Mammary epithelial cell (primary cell): ENCODE measurements at regions of chr3 and their contacts with region 1.

Region 1: DNA sequence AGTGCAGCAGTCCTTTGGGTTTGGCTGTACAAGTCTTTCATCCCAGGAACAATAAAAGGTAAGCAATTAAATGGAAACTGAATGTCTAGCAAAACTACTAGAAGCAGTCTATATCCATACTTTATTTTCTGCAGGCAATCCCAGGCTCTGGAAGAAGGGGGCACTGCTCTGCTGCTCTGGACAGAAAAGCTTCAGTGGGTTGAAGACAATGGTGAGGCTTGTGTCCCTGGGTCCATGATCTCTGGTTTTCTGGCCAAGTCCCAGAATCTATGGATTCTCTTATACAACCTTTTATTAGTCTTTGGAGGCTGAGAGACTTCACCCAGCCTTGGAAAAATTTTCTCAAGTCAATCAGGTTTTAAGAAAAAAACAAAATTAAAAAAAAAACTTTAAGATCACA is 35.6 kb downstream of the SCAP start:
- DNase-seq: no peak
- H3K4me3 ChIP-seq: no peak overlapping the region
- H3K27ac ChIP-seq: no peak overlapping the region
- H3K4me1 ChIP-seq: peaks cover 29% of the 10 kb centered on the region
- H3K27me3 ChIP-seq: no peaks in the 10 kb centered on the region
- CTCF ChIP-seq: peak; percentile 15 to 53

Region 2: DNA sequence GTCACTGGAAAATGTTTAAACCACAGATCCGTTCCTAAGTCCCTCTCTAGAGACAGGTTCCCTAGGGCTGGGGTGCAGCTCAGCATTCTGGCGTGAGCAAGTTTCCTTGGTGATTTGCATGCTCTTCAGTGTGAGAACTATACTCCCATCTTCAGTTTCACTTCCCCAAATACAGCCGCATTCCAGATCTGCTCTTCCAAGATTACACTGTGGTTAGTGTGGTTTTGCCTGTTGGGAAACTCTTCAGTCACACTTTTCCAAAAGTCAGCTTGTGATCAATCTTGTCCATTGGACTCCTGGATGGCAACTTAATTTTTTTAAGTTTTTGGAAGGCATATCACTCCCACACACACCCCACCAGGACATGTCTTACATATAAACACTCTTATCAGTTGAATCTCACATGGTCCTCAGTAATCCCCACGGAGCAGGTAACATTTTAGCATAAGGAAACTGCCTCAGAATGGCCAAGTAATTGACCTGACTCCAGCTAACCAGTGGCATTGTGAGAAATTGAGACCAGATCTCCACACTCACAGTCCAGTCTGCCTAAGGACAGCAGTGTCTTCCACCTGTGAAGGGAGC is 92.8 kb before region 1 on chr3:
- CTCF ChIA-PET with region 1: no interaction called
- dilution Hi-C with region 1: no loop called
- in situ Hi-C with region 1: no loop called
- intact Hi-C with region 1: no loop called
- DNase-seq: peak; percentile 47
- H3K4me3 ChIP-seq: no peak overlapping the region
- H3K27ac ChIP-seq: no peak overlapping the region
- H3K4me1 ChIP-seq: peaks cover 5% of the 10 kb centered on the region
- H3K27me3 ChIP-seq: no peaks in the 10 kb centered on the region
- CTCF ChIP-seq: no peak

Region 3: DNA sequence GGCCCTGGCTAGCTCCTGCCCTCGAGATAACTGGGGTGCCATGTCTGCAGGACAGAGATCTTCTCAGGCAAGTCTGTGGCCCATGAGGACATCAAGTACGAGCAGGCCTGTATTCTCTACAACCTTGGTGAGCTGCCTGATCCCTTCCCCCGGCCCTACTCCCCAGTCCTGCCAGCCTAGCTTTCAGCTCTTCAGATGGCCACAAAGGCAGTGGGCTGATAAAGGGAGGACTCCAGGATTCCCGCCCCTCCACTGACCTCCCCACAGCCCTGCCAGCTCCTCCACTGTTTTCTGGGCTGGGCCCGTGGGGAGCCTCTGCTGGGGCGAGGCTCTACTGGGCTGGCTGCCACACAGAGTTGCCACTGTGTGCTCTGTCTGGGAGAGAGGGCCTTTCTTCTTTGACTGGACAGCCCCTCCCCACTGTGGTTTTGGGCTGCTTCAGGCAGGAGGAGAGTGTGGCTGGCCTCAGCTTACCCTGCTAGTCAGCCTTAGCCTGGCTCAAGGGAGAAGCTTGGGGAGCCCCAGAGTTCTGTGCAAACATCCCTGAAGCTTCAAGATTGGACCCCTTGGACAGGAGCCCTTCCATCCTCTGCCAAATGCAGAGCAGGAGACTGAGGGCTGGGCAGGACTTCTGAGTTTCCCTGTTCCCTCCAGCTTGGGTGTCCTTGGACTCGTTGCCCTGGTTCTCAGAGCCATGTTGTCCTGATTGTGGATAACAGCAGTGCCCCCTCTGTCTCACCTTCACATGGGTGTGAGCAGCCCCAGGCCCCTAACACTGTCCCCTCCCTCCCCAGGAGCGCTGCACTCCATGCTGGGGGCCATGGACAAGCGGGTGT is 35.0 kb before region 1 on chr3:
- CTCF ChIA-PET with region 1: no interaction called
- dilution Hi-C with region 1: loop called (anchors 5 kb)
- in situ Hi-C with region 1: no loop called
- intact Hi-C with region 1: no loop called
- DNase-seq: peak; percentile 23
- H3K4me3 ChIP-seq: no peak overlapping the region
- H3K27ac ChIP-seq: no peak overlapping the region
- H3K4me1 ChIP-seq: peaks cover 9% of the 10 kb centered on the region
- H3K27me3 ChIP-seq: no peaks in the 10 kb centered on the region
- CTCF ChIP-seq: no peak

Region 4: GRCh38 chr3:47475570-47476329 is 35.6 kb after region 1 on chr3 and contains the start of gene SCAP:
- CTCF ChIA-PET with region 1: no interaction called
- dilution Hi-C with region 1: no loop called
- in situ Hi-C with region 1: loop called in 1 of 2 experiments (anchors 5 kb)
- intact Hi-C with region 1: loop called (anchors 1 kb)
- DNase-seq: peak; percentile 79
- H3K4me3 ChIP-seq: peak within 1 kb of the TSS; percentile 89 to 99 (median 94)
- H3K27ac ChIP-seq: peak within 1 kb of the TSS; percentile 55
- H3K4me1 ChIP-seq: peaks cover 5% of the 10 kb centered on the region
- H3K27me3 ChIP-seq: no peaks in the 10 kb centered on the region
- CTCF ChIP-seq: peak; percentile 59 to 87
- total RNA-seq, gene SCAP: 72.5 to 75.4 TPM

Region 5: DNA sequence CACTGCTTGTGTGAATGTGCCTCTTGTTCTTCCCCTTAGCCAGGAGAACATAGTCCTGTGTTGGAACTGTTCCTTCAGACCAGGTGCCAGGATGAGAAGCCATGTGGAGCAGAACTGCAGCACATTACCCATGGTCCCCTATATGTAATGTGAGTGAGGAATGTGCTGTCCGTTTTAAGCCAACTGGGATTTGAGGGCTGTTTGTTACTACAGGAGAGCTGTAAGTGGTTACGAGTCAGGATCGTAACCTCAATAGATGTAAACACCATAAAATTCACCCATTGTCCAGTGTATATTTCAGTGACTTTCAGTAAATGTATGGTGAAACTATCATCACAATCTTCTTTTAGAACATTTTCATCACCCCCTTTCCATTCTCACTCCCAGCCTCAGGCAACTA is 45.7 kb after region 1 on chr3:
- CTCF ChIA-PET with region 1: interaction called, 6 read pairs
- dilution Hi-C with region 1: loop called (anchors 5 kb)
- in situ Hi-C with region 1: no loop called
- intact Hi-C with region 1: no loop called
- DNase-seq: no peak
- H3K4me3 ChIP-seq: no peak overlapping the region
- H3K27ac ChIP-seq: no peak overlapping the region
- H3K4me1 ChIP-seq: no peaks in the 10 kb centered on the region
- H3K27me3 ChIP-seq: no peaks in the 10 kb centered on the region
- CTCF ChIP-seq: no peak

Region 6: DNA sequence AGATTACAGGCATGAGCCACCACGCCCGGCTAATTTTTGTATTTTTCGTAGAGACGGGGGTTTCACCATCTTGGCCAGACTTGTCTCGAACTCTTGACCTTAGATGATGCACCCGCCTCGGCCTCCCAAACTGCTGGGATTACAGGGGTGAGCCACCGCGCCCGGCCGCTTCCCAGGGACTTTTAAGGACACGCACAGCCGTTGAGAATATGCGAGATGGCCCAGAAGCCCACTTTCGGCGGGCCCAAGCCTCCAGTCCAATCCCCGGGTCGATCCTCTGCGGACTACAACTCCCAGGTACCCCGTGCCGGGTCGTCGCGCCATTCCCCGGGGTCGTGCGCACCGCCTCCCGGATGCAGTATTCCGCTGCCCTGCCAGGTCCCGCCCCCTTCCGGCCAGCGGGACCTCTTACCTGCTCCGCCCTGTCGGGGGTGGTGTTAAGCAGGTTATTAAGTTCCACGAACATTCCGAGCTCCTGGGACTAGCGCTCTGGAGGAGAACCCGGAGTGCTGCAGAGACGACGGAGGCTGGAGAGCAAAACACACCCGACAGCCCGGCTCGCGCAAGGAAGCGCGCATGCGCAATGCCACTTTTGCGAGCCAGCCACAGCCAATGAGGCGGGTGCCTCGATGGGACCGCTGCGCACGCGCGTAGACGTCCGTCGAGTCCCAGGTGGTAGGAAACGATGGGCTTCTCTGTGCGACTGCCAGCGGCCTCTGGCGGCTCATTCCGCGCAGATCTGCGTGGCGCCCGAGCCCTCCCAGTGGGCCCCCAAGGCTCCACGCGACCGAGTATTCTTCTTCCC is 73.2 kb after region 1 on chr3 and contains the start of gene ELP6:
- CTCF ChIA-PET with region 1: no interaction called
- dilution Hi-C with region 1: no loop called
- in situ Hi-C with region 1: no loop called
- intact Hi-C with region 1: loop called (anchors 1 kb)
- DNase-seq: peak; percentile 93
- H3K4me3 ChIP-seq: peak within 1 kb of the TSS; percentile 85 to 91 (median 85)
- H3K27ac ChIP-seq: peak within 1 kb of the TSS; percentile 69
- H3K4me1 ChIP-seq: peaks cover 4% of the 10 kb centered on the region
- H3K27me3 ChIP-seq: no peaks in the 10 kb centered on the region
- CTCF ChIP-seq: peak; percentile 15 to 53
- total RNA-seq, gene ELP6: 22.3 to 38.2 TPM

Region 7: DNA sequence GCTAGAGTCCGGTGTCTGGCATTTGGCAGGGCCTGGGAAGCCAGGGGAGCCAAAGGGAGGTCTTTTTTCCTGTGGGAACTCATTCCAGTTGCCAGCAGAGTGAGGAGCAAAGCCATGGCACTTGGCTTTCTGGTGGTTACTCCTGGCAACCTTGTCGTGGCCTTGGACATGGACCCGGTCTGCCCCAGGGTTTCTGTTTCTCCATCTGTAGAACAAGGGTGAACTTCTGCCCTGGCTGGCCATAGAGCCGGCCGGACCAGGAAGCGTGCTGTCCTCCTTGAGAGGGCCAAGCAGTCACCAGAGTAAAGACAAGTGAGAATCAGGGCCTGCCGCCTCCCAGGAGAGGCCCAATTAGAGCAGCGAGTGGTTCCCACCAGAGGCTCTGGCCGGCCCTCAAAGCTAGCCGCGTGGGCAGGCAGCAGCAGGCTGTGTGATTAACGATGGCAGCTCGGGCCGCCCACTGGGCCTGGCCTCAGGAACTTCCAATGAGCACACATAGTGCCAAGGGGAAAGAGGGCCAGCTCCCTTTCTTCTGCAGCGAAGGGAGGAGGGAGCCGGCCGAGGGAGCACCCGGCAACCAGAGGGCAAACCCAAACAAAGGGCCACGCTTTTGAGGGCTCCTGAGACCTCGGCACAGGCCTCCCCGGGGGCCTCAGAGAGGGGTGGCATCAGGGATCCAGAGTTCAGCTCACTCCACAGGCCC is 102.5 kb after region 1 on chr3:
- CTCF ChIA-PET with region 1: no interaction called
- dilution Hi-C with region 1: loop called (anchors 5 kb)
- in situ Hi-C with region 1: no loop called
- intact Hi-C with region 1: no loop called
- DNase-seq: peak; percentile 26
- H3K4me3 ChIP-seq: no peak overlapping the region
- H3K27ac ChIP-seq: no peak overlapping the region
- H3K4me1 ChIP-seq: no peaks in the 10 kb centered on the region
- H3K27me3 ChIP-seq: peaks cover 2% of the 10 kb centered on the region
- CTCF ChIP-seq: no peak

Region 8: DNA sequence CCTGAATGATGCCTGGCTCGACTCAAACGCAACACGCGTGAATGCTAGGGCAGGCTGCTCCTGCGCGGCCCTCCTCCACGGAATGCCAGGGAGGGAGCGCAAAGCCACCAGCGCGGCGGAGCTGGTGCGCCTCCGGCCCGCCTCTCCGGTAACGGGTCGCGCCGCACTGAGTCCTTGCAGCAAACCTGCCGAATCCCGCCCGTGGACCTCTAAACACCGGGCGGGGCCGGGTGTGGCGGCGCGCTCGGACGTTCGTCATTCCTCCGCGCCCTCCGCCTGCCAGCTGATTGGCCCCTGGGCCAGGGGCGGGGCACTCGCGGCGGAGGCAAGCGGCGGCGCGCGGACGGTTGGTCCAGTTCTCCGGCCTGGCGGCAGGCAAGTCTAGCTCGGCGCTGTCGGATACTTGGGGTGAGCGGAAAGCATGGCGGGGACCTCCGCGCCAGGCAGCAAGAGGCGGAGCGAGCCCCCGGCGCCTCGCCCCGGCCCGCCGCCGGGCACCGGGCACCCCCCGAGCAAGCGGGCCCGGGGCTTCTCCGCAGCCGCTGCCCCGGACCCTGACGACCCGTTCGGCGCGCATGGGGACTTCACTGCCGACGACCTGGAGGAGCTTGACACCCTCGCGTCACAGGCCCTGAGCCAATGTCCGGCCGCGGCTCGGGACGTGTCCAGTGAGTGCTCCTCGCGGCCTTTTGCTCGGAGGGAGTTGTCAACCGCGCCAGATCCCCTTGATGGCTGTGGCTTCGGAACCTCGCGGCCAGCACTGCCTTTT is 1006.5 kb after region 1 on chr3 and contains the start of gene ATRIP:
- CTCF ChIA-PET with region 1: no interaction called
- dilution Hi-C with region 1: no loop called
- in situ Hi-C with region 1: no loop called
- intact Hi-C with region 1: loop called (anchors 5 kb)
- DNase-seq: peak; percentile 90
- H3K4me3 ChIP-seq: peak within 1 kb of the TSS; percentile 66 to 83 (median 74)
- H3K27ac ChIP-seq: peak within 1 kb of the TSS; percentile 70
- H3K4me1 ChIP-seq: peaks cover 20% of the 10 kb centered on the region
- H3K27me3 ChIP-seq: no peaks in the 10 kb centered on the region
- CTCF ChIP-seq: no peak
- total RNA-seq, gene ATRIP: 7.2 to 13.2 TPM